HepG2 (cell line): ENCODE measurements at regions of chr18 and their contacts with region 1.

Region 1: GRCh38 chr18:32576296-32576916 is 105.7 kb upstream of the GAREM1 start:
- DNase-seq: peak; percentile 29
- ATAC-seq: peak; percentile 93
- H3K4me3 ChIP-seq: no peak overlapping the region
- H3K27ac ChIP-seq: no peak overlapping the region
- H3K4me1 ChIP-seq: no peaks in the 10 kb centered on the region
- H3K27me3 ChIP-seq: peaks cover 0 to 11% of the 10 kb centered on the region in 2 experiments; a peak in 1 of 5 replicates
- CTCF ChIP-seq: peak; percentile 45
- EP300 ChIP-seq: no peak
- POLR2A ChIP-seq: no peak
- RAD21 ChIP-seq: 0 out of 2 replicates have a peak, but pooled peaks have one; percentile 11

Region 2: GRCh38 chr18:32629981-32630700 is 53.7 kb after region 1 on chr18:
- CTCF ChIA-PET with region 1: no interaction called
- POLR2A ChIA-PET with region 1: no interaction called
- in situ Hi-C with region 1: no loop called
- intact Hi-C with region 1: loop called (anchors 10 kb)
- DNase-seq: no peak
- ATAC-seq: no peak
- H3K4me3 ChIP-seq: no peak overlapping the region
- H3K27ac ChIP-seq: no peak overlapping the region
- H3K4me1 ChIP-seq: no peaks in the 10 kb centered on the region
- H3K27me3 ChIP-seq: no peaks in the 10 kb centered on the region
- CTCF ChIP-seq: no peak
- EP300 ChIP-seq: no peak
- POLR2A ChIP-seq: no peak
- RAD21 ChIP-seq: no peak

Region 3: GRCh38 chr18:32930695-32931301 is 354.4 kb after region 1 on chr18:
- CTCF ChIA-PET with region 1: no interaction called
- POLR2A ChIA-PET with region 1: no interaction called
- in situ Hi-C with region 1: no loop called
- intact Hi-C with region 1: loop called (anchors 2 kb)
- DNase-seq: peak; percentile 55
- ATAC-seq: peak; percentile 98
- H3K4me3 ChIP-seq: no peak overlapping the region
- H3K27ac ChIP-seq: no peak overlapping the region
- H3K4me1 ChIP-seq: no peaks in the 10 kb centered on the region
- H3K27me3 ChIP-seq: no peaks in the 10 kb centered on the region
- CTCF ChIP-seq: peak; percentile 73
- EP300 ChIP-seq: no peak
- POLR2A ChIP-seq: no peak
- RAD21 ChIP-seq: no peak